Right lobe of liver (tissue), 6 donors: ENCODE measurements at regions of chr20 and their contacts with region 1.

Region 1: GRCh38 chr20:44210422-44211176 is at the start of gene OSER1:
- DNase-seq: peak; percentile 97 to 98 (median 98)
- ATAC-seq: peak; percentile 87 to 95 (median 91)
- H3K4me3 ChIP-seq: peak within 1 kb of the TSS; percentile 76 to 94 (median 89)
- H3K27ac ChIP-seq: peak within 1 kb of the TSS; percentile 94 to 97 (median 96)
- H3K4me1 ChIP-seq: peaks cover 0 to 47% (median 9%) of the 10 kb centered on the region in 4 donors
- H3K27me3 ChIP-seq: no peaks in the 10 kb centered on the region
- CTCF ChIP-seq: peak in 1 of 4 donors; percentile 3
- POLR2A ChIP-seq: peak; percentile 96
- total RNA-seq, gene OSER1: 13.0 to 20.4 (median 17.3) TPM

Region 2: DNA sequence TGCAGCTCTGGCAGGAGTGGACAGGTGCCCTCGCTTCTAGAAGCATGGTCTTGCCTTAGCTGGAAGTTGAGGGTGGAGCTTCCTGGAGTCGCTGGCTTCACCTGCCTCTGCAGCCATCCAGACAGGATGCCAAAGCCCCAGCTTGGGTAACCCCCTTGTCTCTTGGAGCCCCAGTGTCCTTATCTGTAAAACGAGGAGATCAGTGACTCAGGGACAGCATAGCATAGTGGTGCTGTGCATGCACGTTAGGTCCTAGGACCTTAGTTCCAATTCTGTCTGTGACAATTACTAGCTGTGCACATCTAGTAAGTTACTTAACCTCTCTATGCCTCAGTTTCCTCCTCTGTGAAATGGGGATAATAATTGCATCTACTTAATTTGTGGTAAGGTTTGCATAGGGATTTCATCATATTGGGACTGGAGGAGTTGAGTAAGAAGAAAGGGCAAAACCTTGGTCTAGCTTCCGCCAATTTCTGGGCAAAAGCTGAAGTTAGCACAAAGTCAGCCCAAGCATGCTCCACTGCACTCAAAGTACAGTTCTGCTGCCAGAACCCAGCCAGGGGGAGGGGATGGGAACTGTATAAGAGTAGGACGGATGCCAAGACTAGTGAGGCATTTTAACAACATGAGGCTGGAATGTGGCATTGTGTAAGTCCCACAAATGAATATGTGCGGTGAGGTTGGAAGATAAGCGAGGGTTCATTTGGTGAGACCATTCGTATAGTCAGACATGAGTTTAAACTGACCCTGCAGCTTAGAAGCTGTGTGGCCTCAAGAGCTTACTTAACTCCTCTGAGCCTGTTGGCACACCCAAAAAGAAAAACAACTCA is 271.5 kb before region 1 on chr20:
- intact Hi-C with region 1: no loop called
- DNase-seq: peak in 1 of 3 donors; percentile 56
- ATAC-seq: peak; percentile 61 to 74 (median 68)
- H3K4me3 ChIP-seq: no peak overlapping the region
- H3K27ac ChIP-seq: no peak overlapping the region
- H3K4me1 ChIP-seq: peaks cover 0 to 18% (median 5%) of the 10 kb centered on the region in 4 donors
- H3K27me3 ChIP-seq: no peaks in the 10 kb centered on the region
- CTCF ChIP-seq: no peak
- POLR2A ChIP-seq: no peak

Region 3: GRCh38 chr20:44001667-44002596 is 208.7 kb before region 1 on chr20:
- intact Hi-C with region 1: no loop called
- DNase-seq: no peak
- ATAC-seq: no peak
- H3K4me3 ChIP-seq: no peak overlapping the region
- H3K27ac ChIP-seq: no peak overlapping the region
- H3K4me1 ChIP-seq: no peaks in the 10 kb centered on the region
- H3K27me3 ChIP-seq: no peaks in the 10 kb centered on the region
- CTCF ChIP-seq: no peak
- POLR2A ChIP-seq: no peak

Region 4: GRCh38 chr20:44489931-44490330 is 279.3 kb after region 1 on chr20:
- intact Hi-C with region 1: loop called in 1 of 2 experiments (anchors 10 kb)
- DNase-seq: no peak
- ATAC-seq: no peak
- H3K4me3 ChIP-seq: no peak overlapping the region
- H3K27ac ChIP-seq: no peak overlapping the region
- H3K4me1 ChIP-seq: peaks cover 0 to 1% (median 0%) of the 10 kb centered on the region in 4 donors
- H3K27me3 ChIP-seq: no peaks in the 10 kb centered on the region
- CTCF ChIP-seq: no peak
- POLR2A ChIP-seq: no peak